Caco-2 (cell line): ENCODE measurements at regions of chr15 and their contacts with region 1.

Region 1: DNA sequence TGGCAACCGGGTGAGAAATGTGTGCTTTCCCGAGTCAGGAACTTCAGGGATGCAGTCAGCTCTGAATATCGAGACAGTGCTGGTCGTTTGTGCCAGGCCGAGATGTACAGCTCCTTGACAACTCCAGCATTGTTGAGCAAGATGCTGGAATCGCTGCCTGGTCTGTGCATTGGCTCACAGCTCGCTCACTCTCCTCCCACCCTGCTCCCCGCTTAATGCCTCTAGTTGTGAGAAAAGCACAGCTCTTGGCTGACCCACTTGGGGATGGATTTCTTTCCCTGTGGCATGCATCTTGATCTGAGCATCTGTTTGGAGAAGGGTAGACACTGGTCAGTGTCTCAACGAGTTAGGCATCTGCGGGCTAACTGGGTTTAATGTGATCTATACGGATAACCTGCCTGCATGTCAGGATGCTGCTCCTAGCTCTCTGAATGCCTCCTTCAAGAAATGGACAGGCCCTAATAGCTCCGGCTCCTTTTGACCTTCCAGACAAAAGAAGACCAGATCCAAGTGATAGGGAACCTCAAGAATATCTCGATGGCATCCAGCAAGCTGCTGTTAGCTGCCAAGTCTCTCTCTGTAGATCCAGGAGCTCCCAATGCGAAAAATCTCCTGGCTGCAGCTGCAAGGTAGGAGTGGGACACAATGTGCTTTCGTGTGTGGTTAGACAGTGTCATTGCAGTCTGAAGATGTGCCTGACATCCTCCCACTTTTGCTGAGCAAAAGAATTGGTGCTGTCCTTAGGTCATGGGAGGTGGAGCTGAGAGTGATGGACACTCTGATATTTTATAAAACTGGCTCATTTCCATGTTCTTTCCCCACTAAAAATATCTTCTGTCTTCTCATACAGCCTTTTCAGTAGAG is 302.2 kb upstream of the TPM1 start:
- DNase-seq: no peak
- H3K4me3 ChIP-seq: no peak overlapping the region
- H3K4me3 Mint-ChIP-seq: no peak overlapping the region
- H3K27ac Mint-ChIP-seq: no peak overlapping the region
- H3K4me1 ChIP-seq: peaks cover 4% of the 10 kb centered on the region; the same call in 1 of the 2 replicates
- H3K4me1 Mint-ChIP-seq: no peaks in the 10 kb centered on the region
- H3K27me3 ChIP-seq: no peaks in the 10 kb centered on the region
- H3K27me3 Mint-ChIP-seq: no peaks in the 10 kb centered on the region
- CTCF ChIP-seq: no peak

Region 2: GRCh38 chr15:62344806-62345539 is 395.4 kb before region 1 on chr15:
- CTCF ChIA-PET with region 1: no interaction called
- POLR2A ChIA-PET with region 1: no interaction called
- intact Hi-C with region 1: no loop called
- DNase-seq: peak; percentile 65 to 74
- H3K4me3 ChIP-seq: no peak overlapping the region
- H3K4me3 Mint-ChIP-seq: peak overlapping the region; percentile 70
- H3K27ac Mint-ChIP-seq: peak overlapping the region; percentile 62
- H3K4me1 ChIP-seq: no peaks in the 10 kb centered on the region
- H3K4me1 Mint-ChIP-seq: peaks cover 8% of the 10 kb centered on the region
- H3K27me3 ChIP-seq: no peaks in the 10 kb centered on the region
- H3K27me3 Mint-ChIP-seq: no peaks in the 10 kb centered on the region
- CTCF ChIP-seq: peak; percentile 72 to 74

Region 3: DNA sequence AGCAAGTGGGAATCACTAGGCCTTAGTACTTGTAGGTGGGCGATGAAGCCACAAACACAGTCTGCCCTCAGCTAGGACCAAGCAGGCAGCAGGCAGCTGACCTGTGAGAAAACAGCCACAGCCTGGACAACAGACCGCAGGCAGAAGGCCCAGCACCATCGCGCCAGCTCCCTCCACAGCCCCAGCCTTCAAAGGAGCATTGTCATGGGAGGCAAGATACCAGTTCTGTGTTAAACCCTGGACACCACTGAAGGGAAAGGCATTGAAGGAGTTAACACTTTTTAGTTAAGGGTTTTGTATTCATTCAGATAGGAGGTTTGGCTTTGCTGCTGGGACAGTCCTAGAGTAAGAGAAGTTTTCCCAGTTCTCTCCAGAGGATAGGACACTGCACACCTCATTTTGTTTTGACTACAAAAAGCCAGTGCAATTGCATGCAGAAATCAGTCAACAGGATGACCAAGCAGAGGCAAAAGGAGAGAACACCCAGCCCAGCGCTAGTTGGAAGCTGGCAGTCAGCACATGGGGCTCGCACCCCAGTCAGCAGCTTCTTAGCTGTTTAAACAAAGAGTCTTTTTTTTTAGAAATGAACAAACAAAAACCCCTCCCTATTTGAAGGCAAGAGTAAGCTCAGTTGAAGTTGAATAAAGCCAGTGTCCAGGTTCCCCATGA is 16.1 kb after region 1 on chr15:
- CTCF ChIA-PET with region 1: interaction called, 5 read pairs
- POLR2A ChIA-PET with region 1: no interaction called
- intact Hi-C with region 1: loop called (anchors 1 kb)
- DNase-seq: no peak
- H3K4me3 ChIP-seq: no peak overlapping the region
- H3K4me3 Mint-ChIP-seq: no peak overlapping the region
- H3K27ac Mint-ChIP-seq: no peak overlapping the region
- H3K4me1 ChIP-seq: peaks cover 21% of the 10 kb centered on the region
- H3K4me1 Mint-ChIP-seq: peaks cover 14% of the 10 kb centered on the region
- H3K27me3 ChIP-seq: no peaks in the 10 kb centered on the region
- H3K27me3 Mint-ChIP-seq: no peaks in the 10 kb centered on the region
- CTCF ChIP-seq: no peak

Region 4: DNA sequence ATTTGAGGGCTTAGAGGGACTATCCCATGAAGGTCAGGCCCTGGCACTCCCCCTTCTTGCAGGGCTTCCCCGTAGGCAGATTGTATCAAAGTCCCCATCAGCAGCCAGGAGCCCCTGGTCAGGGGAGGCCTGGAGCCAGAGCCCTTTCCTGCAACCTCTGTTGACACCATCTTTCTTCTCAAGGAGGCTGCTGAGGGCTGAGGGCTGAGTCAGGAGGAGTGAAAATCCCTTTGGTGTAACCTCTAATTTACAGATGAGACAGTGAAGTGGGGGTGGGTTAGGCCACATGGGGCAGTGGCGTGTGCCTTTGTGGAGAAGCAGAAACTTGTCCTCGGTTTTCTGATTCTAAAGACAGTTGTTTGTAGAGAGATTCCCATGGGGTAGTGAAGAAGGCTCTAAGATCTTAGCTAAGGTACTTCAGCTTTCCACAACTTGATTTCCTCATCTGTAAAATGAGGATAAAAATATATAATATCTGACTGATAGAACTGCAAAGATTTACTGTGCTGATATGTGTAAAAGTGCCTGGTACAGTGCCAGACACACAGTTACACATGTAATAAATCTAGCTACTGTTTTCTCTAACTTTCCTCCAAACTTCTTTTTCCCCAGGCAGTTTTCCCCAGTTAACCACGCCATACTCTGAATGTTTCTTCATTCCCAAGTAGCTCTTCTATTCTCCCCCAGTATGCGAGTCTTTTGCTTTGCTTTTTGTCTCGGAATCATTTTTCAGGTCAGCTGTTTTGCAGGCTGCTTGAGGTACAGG is 52.8 kb after region 1 on chr15:
- CTCF ChIA-PET with region 1: no interaction called
- POLR2A ChIA-PET with region 1: no interaction called
- intact Hi-C with region 1: no loop called
- DNase-seq: no peak
- H3K4me3 ChIP-seq: no peak overlapping the region
- H3K4me3 Mint-ChIP-seq: no peak overlapping the region
- H3K27ac Mint-ChIP-seq: no peak overlapping the region
- H3K4me1 ChIP-seq: 0 out of 2 replicates have a peak, but pooled peaks cover 1% of the 10 kb centered on the region
- H3K4me1 Mint-ChIP-seq: peaks cover 9% of the 10 kb centered on the region
- H3K27me3 ChIP-seq: no peaks in the 10 kb centered on the region
- H3K27me3 Mint-ChIP-seq: no peaks in the 10 kb centered on the region
- CTCF ChIP-seq: no peak